Activated naive CD4-positive, alpha-beta T cell treated with anti-CD3 and anti-CD28 coated beads for 36 hours (primary cell): ENCODE measurements at regions of chr6 and their contacts with region 1.

Region 1: GRCh38 chr6:75620381-75621304 is 19.0 kb downstream of the SENP6 start:
- DNase-seq: no peak
- H3K4me3 Mint-ChIP-seq: no peak overlapping the region
- H3K27ac Mint-ChIP-seq: no peak overlapping the region
- H3K4me1 Mint-ChIP-seq: peaks cover 48% of the 10 kb centered on the region
- H3K27me3 Mint-ChIP-seq: no peaks in the 10 kb centered on the region

Region 2: DNA sequence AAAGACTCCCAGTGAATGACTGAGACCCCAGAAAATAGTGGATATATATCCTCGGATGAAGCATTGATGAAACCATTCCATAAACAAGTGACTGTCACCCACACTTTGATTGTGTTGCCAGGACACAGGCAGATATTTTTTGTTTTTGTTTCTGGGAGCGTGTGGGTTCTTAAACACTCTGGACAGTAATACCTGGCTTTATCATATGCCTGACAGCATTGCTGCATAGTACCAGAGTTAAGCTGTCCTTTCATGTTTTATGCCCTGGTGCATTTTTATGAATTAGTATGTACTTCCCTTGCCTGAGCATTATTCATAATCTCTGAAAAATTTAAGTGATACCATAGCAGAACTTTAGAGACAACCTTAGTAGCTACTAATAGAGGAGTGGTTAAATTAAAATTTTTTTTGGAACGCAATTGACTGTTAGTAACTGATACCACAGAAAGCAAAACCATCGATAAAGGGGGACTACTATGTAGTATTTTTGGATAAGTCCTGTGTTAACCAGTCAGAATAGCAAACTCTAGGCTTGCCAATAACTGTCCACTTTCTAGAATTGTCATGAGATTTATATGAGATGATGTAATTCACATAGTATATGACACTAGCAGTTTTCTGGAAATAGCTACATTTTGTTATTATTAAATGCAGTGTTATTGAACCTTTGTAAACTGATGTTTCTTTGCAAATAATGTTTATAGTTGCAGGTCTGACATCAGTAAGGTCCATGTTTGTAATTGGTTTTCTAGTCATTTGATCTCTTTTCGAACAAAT is 11.4 kb after region 1 on chr6:
- CTCF ChIA-PET with region 1: no interaction called
- intact Hi-C with region 1: loop called (anchors 2 kb)
- DNase-seq: no peak
- H3K4me3 Mint-ChIP-seq: no peak overlapping the region
- H3K27ac Mint-ChIP-seq: peak overlapping the region; percentile 16
- H3K4me1 Mint-ChIP-seq: peaks cover 15% of the 10 kb centered on the region
- H3K27me3 Mint-ChIP-seq: no peaks in the 10 kb centered on the region

Region 3: DNA sequence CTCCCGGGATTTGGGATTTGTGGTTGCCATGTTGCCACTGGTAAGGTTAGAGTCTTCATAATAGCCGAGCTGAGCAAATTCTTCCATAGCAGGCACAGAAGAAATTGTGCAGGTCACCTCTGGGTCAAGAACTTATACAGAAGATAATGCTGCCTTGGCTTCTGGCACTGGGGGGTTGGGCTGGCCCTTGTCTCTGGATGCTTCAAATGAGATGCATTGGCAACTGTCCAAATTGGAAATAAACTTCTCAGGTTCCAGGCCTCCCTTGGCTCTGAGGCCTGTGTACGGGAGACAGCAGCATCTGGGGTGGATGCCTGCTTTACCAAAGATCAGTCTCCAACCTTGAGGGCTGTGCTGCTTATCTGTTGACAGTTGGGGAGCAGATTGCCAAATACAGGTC is 154.6 kb after region 1 on chr6:
- CTCF ChIA-PET with region 1: no interaction called
- intact Hi-C with region 1: no loop called
- DNase-seq: no peak
- H3K4me3 Mint-ChIP-seq: no peak overlapping the region
- H3K27ac Mint-ChIP-seq: no peak overlapping the region
- H3K4me1 Mint-ChIP-seq: no peaks in the 10 kb centered on the region
- H3K27me3 Mint-ChIP-seq: no peaks in the 10 kb centered on the region